G401 (cell line): ENCODE measurements at regions of chr5 and their contacts with region 1.

Region 1: DNA sequence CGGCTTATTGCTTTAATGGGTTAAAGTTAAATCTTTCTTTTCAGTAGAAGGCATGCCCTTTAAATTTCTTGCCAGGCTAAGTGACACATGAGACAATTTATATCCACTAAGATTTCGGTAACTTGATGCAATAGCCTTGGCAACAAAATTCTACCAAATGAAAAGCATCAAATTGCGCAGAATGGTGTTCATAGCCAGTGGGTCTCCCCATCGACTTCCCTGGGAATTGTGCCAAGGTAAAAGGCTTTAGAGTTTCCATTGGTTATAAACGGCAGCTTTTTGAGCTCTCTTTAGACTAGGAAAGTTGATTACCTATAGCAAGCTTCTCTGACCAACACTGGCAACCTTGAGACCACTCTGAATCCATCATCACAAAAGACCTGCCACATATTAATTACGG is 358.4 kb downstream of the ARRDC3 start:
- DNase-seq: no peak

Region 2: DNA sequence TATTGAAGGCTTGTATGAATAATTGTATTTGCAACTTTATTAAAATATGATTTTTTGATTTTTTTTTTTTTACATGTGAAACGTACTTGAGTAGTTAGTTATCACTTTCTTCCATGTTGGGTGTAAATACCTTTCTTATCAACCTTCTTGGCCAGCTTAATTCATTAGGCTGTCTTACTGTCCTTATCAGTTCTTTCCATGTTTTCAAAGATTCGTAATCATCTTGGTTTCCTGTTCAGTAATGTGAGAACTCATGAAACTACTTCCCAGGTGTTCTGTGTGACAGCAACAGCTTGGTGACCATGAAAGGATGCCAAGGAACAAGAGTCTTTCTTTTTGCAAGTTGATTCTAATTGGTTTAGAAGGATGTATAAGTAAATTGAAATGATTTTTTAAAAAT is 366.1 kb before region 1 on chr5:
- in situ Hi-C with region 1: no loop called
- DNase-seq: no peak

Region 3: GRCh38 chr5:90911169-90911568 is 113.6 kb before region 1 on chr5:
- in situ Hi-C with region 1: loop called (anchors 10 kb)
- DNase-seq: no peak